Dorsolateral prefrontal cortex (tissue), 120 donors: ENCODE measurements at regions of chr5 and their contacts with region 1.

Region 1: DNA sequence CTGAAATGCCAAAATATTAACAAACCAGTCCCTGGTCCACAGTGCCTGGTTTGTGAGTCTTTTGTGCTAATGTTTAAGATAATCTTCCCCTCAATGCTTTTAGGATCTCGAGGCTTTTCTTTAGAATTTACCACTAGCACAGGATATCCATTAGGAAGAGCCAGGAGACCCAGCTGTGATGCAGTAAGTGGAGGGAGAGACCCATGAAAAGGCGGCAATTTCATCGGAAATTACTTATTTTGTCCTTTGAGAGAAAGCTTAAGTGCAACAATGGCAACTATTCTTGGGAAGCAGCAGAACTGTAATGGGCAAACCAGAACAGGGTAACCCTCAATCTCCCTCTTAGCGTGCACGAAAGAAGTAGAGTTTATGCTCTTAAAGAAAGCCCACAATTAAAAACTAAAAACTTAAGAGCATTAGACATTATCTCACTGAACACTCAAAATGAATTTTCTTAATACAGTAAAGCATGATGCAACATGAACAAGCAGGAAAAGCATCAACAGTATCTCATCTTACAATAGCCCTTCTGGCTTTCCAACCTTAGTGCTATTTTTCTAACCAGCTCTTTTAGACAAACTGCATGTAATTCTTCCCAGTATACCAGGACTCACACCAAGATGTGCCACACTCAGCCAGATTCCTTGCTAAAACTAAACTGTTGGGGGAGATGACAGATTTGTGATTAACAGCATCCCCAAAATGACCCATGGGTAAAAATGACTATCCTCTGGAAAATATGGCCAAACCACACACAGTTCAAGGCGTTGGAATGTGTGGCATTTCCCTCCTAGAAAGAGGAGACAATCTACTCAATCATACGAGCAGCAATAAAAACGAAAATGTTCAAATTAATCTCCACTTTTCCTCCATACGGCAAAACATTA is 36.4 kb downstream of the PWWP2A start:
- DNase-seq: no peak
- H3K4me3 ChIP-seq: no peak overlapping the region
- H3K27ac ChIP-seq: peak overlapping the region in 3 of 59 donors; percentile 6 to 24 (median 18)
- H3K27me3 ChIP-seq: no peaks in the 10 kb centered on the region
- CTCF ChIP-seq: no peak

Region 2: GRCh38 chr5:160133071-160133917 is 50.4 kb after region 1 on chr5:
- intact Hi-C with region 1: no loop called
- DNase-seq: peak in 1 of 10 donors; percentile 41
- H3K4me3 ChIP-seq: peak overlapping the region in 20 of 59 donors; percentile 3 to 50 (median 27)
- H3K27ac ChIP-seq: peak overlapping the region in 10 of 59 donors; percentile 11 to 53 (median 32)
- H3K27me3 ChIP-seq: no peaks in the 10 kb centered on the region
- CTCF ChIP-seq: no peak

Region 3: DNA sequence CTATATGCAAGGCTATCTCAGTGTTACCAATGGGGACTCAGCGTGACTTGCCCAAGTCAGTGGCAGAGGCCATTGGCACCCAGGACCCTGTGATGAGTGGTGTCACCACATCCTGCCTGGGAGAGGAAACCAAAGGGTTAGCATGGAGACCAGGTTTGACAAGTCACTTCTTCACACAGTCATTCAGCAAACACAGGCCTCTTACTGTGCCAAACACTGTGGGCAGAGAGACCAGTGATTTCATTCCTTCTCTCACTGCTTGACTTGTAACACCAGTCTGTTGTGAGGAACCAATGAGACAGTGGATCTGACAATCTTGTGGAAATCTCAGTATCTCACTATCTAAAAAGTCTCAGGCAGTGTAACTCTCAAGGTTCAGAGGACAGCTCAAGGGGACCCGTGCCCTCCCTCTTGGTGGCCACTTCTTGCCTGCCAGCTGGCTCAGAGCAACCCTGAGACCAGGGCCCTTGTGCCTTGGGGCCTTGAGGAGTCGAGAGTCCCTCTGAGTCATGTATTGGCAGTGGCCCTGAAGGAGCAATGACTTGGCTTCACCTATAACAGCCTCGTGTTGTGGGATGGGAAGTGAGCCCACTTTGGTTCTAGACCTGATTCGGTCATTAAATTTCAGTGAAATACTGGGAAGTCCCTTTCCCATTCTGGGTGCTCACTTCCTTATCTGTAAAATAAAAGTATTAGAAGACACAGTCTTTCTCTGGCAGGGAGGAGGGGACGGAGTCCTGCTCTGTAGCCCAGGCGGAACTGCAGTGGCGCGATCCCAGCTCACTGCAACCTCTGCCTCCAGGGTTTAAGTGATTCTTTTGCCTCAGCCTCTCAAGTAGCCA is 148.1 kb after region 1 on chr5:
- intact Hi-C with region 1: no loop called
- DNase-seq: no peak
- H3K4me3 ChIP-seq: no peak overlapping the region
- H3K27ac ChIP-seq: no peak overlapping the region
- H3K27me3 ChIP-seq: no peaks in the 10 kb centered on the region
- CTCF ChIP-seq: no peak

Region 4: GRCh38 chr5:160269017-160269416 is 186.2 kb after region 1 on chr5:
- intact Hi-C with region 1: no loop called
- DNase-seq: peak; percentile 37 to 79 (median 63)
- H3K4me3 ChIP-seq: peak overlapping the region in 23 of 59 donors; percentile 0 to 48 (median 24)
- H3K27ac ChIP-seq: peak overlapping the region in 14 of 59 donors; percentile 1 to 71 (median 36)
- H3K27me3 ChIP-seq: no peaks in the 10 kb centered on the region
- CTCF ChIP-seq: peak in 1 of 56 donors; percentile 14

Region 5: GRCh38 chr5:160342403-160342941 is 259.6 kb after region 1 on chr5:
- intact Hi-C with region 1: loop called in 1 of 2 experiments (anchors 10 kb)
- DNase-seq: peak in 1 of 10 donors; percentile 60
- H3K4me3 ChIP-seq: no peak overlapping the region
- H3K27ac ChIP-seq: peak overlapping the region in 1 of 59 donors; percentile 85
- H3K27me3 ChIP-seq: no peaks in the 10 kb centered on the region
- CTCF ChIP-seq: no peak